MCF 10A (cell line): ENCODE measurements at regions of chrX and their contacts with region 1.

Region 1: GRCh38 chrX:119729408-119730201 is 28.8 kb upstream of the SOWAHD start:
- DNase-seq: peak; percentile 73
- H3K4me3 Mint-ChIP-seq: no peak overlapping the region
- H3K27ac Mint-ChIP-seq: no peak overlapping the region
- H3K4me1 Mint-ChIP-seq: no peaks in the 10 kb centered on the region
- H3K27me3 Mint-ChIP-seq: peaks cover 18% of the 10 kb centered on the region
- CTCF ChIP-seq: peak; percentile 58

Region 2: DNA sequence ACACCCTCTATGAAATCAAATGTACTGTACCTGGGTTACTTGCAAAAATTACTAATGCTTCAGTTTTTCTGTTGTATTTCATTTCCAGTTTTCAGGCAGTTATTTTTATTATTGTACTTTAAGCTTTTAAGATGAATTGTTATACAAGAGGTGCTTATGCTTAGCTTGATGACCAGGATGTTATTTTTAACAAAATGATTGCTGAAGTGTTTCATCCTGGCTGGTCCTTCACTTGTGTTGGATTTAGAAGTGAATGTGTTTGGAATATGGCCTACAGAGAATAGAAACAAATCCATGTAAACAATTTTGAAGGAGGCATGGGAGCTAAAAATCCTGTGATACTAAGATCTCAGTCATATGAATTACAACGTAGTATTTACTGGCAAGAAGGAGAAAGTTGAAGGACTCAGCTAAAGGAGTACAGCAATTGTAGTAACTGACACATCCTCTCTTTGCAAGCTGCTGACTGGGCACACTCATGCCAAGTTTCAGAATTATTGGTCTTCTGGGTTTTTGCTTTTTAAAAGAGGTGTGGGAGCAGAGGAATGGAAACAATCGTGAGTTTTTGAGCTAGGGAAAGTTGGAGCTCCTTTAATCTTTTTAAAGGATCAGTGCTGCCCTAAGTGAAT is 146.1 kb before region 1 on chrX:
- CTCF ChIA-PET with region 1: interaction called, 11 read pairs
- POLR2A ChIA-PET with region 1: no interaction called
- intact Hi-C with region 1: no loop called
- DNase-seq: no peak
- H3K4me3 Mint-ChIP-seq: no peak overlapping the region
- H3K27ac Mint-ChIP-seq: no peak overlapping the region
- H3K4me1 Mint-ChIP-seq: no peaks in the 10 kb centered on the region
- H3K27me3 Mint-ChIP-seq: no peaks in the 10 kb centered on the region
- CTCF ChIP-seq: no peak

Region 3: DNA sequence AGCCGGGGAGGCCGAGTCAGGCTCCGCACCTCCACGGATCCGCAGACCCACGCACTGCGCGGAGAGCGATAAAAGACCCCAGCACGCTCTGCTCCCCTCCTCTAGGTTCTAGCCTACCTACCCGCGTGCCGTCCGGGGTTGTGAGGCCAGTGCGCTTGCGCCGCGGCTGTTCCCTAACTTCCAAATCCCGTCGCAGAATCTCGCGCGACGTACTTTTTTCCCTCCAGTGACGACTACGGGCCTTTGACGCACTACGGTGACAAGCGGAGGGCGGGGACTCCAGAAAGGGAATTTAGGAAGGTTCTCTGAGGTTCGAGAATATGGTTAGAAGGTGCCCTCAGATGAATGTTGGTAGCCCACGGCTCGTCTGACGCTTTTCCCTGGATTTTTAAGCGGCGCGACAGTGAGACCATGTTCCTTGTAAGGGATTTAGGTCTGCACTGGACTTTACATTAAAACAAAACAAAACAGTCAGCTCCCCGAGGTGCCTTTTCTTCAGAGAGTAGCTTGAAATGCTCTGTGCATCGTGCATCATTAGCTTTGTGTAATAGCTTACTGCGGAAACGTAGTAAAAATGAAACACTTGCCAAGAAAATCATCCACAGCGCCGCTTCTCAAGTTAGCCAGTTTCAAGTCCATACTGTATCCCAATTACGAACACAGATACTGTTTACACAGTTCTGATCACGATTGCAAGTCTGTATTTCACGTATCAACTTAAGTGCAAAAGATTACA is 123.2 kb before region 1 on chrX and contains the start of gene NKRF:
- CTCF ChIA-PET with region 1: interaction called, 12 read pairs
- POLR2A ChIA-PET with region 1: interaction called, 4 read pairs
- intact Hi-C with region 1: loop called (anchors 1 kb)
- DNase-seq: peak; percentile 89
- H3K4me3 Mint-ChIP-seq: peak within 1 kb of the TSS; percentile 88
- H3K27ac Mint-ChIP-seq: peak within 1 kb of the TSS; percentile 91
- H3K4me1 Mint-ChIP-seq: peaks cover 4% of the 10 kb centered on the region
- H3K27me3 Mint-ChIP-seq: no peaks in the 10 kb centered on the region
- CTCF ChIP-seq: no peak
- total RNA-seq, gene NKRF: 12.5 and 16.1 TPM in 2 replicates

Region 4: GRCh38 chrX:119698845-119699244 is 30.8 kb before region 1 on chrX:
- CTCF ChIA-PET with region 1: interaction called, 3 read pairs
- POLR2A ChIA-PET with region 1: no interaction called
- intact Hi-C with region 1: loop called (anchors 1 kb)
- DNase-seq: peak; percentile 67
- H3K4me3 Mint-ChIP-seq: no peak overlapping the region
- H3K27ac Mint-ChIP-seq: no peak overlapping the region
- H3K4me1 Mint-ChIP-seq: no peaks in the 10 kb centered on the region
- H3K27me3 Mint-ChIP-seq: peaks cover 15% of the 10 kb centered on the region
- CTCF ChIP-seq: peak; percentile 42

Region 5: GRCh38 chrX:119895843-119896326 is 166.3 kb after region 1 on chrX and contains the start of gene AKAP14:
- CTCF ChIA-PET with region 1: no interaction called
- POLR2A ChIA-PET with region 1: no interaction called
- intact Hi-C with region 1: no loop called
- DNase-seq: no peak
- H3K4me3 Mint-ChIP-seq: no peak within 1 kb of the TSS
- H3K27ac Mint-ChIP-seq: no peak within 1 kb of the TSS
- H3K4me1 Mint-ChIP-seq: no peaks in the 10 kb centered on the region
- H3K27me3 Mint-ChIP-seq: no peaks in the 10 kb centered on the region
- CTCF ChIP-seq: no peak
- total RNA-seq, gene AKAP14: not detected in 2 replicates